Heart right ventricle (tissue), 16 donors: ENCODE measurements at regions of chr16 and their contacts with region 1.

Region 1: GRCh38 chr16:35639233-35640205 is 2180.1 kb downstream of the TP53TG3F start:
- DNase-seq: no peak
- ATAC-seq: no peak
- H3K4me3 ChIP-seq: no peak overlapping the region
- H3K27ac ChIP-seq: no peak overlapping the region
- H3K4me1 ChIP-seq: no peaks in the 10 kb centered on the region
- H3K27me3 ChIP-seq: no peaks in the 10 kb centered on the region
- CTCF ChIP-seq: no peak

Region 2: GRCh38 chr16:35706901-35707300 is 67.4 kb after region 1 on chr16:
- intact Hi-C with region 1: loop called in 1 of 10 experiments (anchors 10 kb)
- DNase-seq: no peak
- ATAC-seq: no peak
- H3K4me3 ChIP-seq: no peak overlapping the region
- H3K27ac ChIP-seq: no peak overlapping the region
- H3K4me1 ChIP-seq: peaks cover 0 to 9% (median 0%) of the 10 kb centered on the region in 9 donors
- H3K27me3 ChIP-seq: no peaks in the 10 kb centered on the region
- CTCF ChIP-seq: no peak